Natural killer cell (primary cell): ENCODE measurements at regions of chr3 and their contacts with region 1.

Region 1: DNA sequence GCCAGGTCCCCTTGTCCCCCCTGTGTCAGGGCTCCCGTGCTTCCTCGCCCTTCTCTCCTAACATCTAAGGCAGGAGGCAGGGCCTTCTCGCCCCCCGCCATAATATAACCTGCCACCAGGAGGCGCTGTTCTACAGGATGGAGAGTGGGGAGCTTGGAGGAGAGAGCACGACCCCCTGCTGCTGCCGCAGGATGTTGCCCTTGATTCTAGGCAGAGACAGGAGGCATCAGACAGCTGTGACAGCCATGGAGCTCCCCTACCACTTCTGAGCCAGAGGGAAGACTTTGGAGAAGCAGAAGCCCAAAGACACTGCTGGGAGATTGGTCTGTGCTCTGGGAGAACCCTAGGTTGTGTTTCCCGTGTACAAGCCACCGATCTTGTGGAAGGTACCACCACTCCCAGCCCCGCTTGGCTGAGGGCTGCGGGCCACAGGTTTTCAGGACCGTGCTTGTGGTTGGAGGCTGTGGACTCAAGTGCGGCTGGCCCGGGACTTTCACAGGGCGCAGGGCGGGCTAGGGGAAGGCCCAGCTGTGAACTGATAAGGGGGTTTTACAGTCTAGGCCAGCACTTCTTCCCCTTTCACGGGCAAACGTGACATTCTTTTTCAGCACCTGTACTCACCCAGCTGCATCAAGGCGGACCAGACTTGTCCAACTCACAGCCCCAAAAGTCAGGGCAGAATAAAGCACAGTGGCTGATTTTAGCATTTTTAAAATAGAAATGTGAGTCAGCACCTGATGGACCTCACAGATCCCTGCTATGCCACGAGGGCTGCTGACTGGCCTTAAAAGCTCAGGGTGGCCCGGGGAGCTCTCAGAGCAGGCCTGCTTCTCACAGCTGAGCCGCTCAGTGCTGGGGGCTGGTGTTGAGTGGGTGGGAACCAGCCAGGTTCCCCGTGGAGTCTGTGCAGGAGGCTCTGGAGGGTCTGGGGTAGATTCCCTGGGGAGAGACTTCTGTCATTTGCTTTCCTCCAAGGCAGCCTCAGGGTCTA is 2.6 kb upstream of the TIGIT start:
- DNase-seq: peak; percentile 86 to 93
- ATAC-seq: peak; percentile 78 to 91 (median 86)
- H3K4me3 ChIP-seq: peak overlapping the region; percentile 5
- H3K4me3 Mint-ChIP-seq: peak overlapping the region; percentile 80
- H3K27ac ChIP-seq: peak overlapping the region; percentile 95
- H3K27ac Mint-ChIP-seq: peak overlapping the region; percentile 92
- H3K4me1 ChIP-seq: peaks cover 57% of the 10 kb centered on the region
- H3K4me1 Mint-ChIP-seq: peaks cover 66 to 68% of the 10 kb centered on the region in 2 donors
- H3K27me3 ChIP-seq: no peaks in the 10 kb centered on the region
- H3K27me3 Mint-ChIP-seq: no peaks in the 10 kb centered on the region
- CTCF ChIP-seq: peak; percentile 95

Region 2: DNA sequence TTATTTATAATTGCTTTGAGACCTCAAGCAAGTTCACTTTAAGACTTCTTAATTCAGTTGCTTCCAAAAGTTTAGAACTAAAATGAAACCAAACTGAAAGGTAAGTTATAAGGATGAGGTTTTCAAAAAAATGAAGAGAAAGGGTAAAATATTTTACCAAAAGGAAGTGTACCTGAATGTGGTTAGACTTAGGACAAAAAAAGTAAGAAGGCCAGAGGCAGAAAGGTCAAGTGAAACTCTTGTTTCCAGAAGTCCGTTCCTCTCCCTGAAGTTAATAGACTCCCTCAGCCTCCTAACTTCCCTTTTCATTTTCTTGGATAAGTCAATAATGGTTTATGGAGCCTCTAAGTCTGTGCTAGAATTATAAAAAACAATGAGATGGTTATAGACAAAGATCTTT is 1808.5 kb before region 1 on chr3:
- intact Hi-C with region 1: no loop called
- DNase-seq: no peak
- ATAC-seq: no peak
- H3K4me3 ChIP-seq: no peak overlapping the region
- H3K4me3 Mint-ChIP-seq: no peak overlapping the region
- H3K27ac ChIP-seq: no peak overlapping the region
- H3K27ac Mint-ChIP-seq: no peak overlapping the region
- H3K4me1 ChIP-seq: peaks cover 11% of the 10 kb centered on the region
- H3K4me1 Mint-ChIP-seq: peaks cover 0 to 8% of the 10 kb centered on the region in 2 donors
- H3K27me3 ChIP-seq: no peaks in the 10 kb centered on the region
- H3K27me3 Mint-ChIP-seq: peaks cover 0 to 3% of the 10 kb centered on the region in 2 donors
- CTCF ChIP-seq: no peak

Region 3: GRCh38 chr3:113783980-113784379 is 507.2 kb before region 1 on chr3:
- intact Hi-C with region 1: no loop called
- DNase-seq: no peak
- ATAC-seq: peak; percentile 52 to 55 (median 54)
- H3K4me3 ChIP-seq: no peak overlapping the region
- H3K4me3 Mint-ChIP-seq: peak overlapping the region; percentile 28
- H3K27ac ChIP-seq: peak overlapping the region; percentile 21
- H3K27ac Mint-ChIP-seq: peak overlapping the region; percentile 75 to 84
- H3K4me1 ChIP-seq: peaks cover 3% of the 10 kb centered on the region
- H3K4me1 Mint-ChIP-seq: peaks cover 9% of the 10 kb centered on the region in 2 donors
- H3K27me3 ChIP-seq: no peaks in the 10 kb centered on the region
- H3K27me3 Mint-ChIP-seq: no peaks in the 10 kb centered on the region
- CTCF ChIP-seq: no peak

Region 4: DNA sequence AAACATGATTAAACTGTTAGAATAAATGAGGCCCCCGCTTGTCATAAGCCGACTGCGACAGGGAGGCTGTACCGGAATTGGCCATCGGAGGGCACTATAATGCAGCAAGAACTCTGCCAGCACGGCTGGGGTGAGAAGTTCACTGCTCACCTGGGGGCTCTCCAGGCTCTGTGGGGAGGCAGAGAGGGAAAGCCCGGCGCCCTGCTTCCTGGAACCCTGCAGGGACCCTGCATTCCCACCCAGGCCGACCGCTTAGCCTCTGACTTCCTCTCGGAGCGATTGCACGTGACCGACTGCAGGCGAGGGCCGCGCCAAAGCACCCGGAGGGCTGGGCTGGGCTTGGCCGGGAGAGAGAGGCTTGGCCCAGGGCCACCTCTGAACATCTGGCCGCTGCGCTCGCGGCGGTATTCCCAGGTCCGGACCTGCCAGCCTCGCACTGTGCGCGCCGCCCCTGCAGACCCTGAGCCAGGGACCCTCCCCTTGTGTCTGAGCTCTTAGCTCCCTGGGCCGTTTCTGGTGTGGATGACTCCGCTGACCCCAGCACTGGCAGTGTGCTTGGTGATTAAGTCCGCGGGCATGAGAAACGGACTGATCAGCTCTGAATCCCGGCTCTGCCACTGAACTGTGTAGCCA is 138.6 kb before region 1 on chr3:
- intact Hi-C with region 1: loop called (anchors 1 kb)
- DNase-seq: peak; percentile 78 to 91
- ATAC-seq: peak; percentile 93 to 98 (median 98)
- H3K4me3 ChIP-seq: peak overlapping the region; percentile 28
- H3K4me3 Mint-ChIP-seq: peak overlapping the region; percentile 74
- H3K27ac ChIP-seq: peak overlapping the region; percentile 6
- H3K27ac Mint-ChIP-seq: peak overlapping the region; percentile 19 to 69
- H3K4me1 ChIP-seq: peaks cover 7% of the 10 kb centered on the region
- H3K4me1 Mint-ChIP-seq: peaks cover 8 to 10% of the 10 kb centered on the region in 2 donors
- H3K27me3 ChIP-seq: no peaks in the 10 kb centered on the region
- H3K27me3 Mint-ChIP-seq: peaks cover 0 to 3% of the 10 kb centered on the region in 2 donors
- CTCF ChIP-seq: peak; percentile 98

Region 5: GRCh38 chr3:114223143-114223542 is 68.1 kb before region 1 on chr3:
- intact Hi-C with region 1: loop called (anchors 1 kb)
- DNase-seq: peak in 1 of 2 donors; percentile 70
- ATAC-seq: peak; percentile 52 to 59 (median 57)
- H3K4me3 ChIP-seq: no peak overlapping the region
- H3K4me3 Mint-ChIP-seq: peak overlapping the region; percentile 78
- H3K27ac ChIP-seq: peak overlapping the region; percentile 65
- H3K27ac Mint-ChIP-seq: peak overlapping the region in 1 of 2 donors; percentile 94
- H3K4me1 ChIP-seq: peaks cover 59% of the 10 kb centered on the region
- H3K4me1 Mint-ChIP-seq: peaks cover 78 to 88% of the 10 kb centered on the region in 2 donors
- H3K27me3 ChIP-seq: no peaks in the 10 kb centered on the region
- H3K27me3 Mint-ChIP-seq: no peaks in the 10 kb centered on the region
- CTCF ChIP-seq: no peak

Region 6: DNA sequence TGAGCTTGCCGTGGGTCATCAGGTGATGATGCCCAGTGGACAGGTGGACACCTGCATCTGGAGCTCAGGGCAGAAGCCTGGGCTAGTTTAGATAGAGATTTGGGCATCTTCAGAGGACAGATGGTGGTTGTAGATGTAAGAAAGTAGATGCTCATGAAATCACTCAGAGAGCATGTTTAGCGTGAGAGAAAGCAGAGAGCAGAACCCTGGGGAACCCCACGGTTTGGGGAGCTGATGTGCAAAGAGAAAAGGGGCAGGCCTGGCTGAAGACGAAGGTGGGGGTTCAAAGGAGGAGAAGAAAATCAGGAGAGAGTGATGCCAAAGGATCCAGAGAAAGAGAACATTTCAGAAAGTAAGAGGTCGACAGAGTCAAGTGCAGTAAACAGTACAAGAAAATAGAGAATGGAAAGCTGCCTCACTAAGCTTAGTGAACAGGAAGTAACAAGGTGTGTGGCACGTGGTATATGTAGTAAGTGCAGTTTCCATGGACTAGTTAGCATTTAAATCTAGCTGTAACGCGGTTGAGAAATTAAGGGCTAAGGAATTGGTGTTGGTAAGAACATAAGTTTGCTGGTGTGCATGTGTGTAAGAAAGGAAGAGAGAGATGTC is 16.1 kb after region 1 on chr3:
- intact Hi-C with region 1: loop called (anchors 2 kb)
- DNase-seq: peak in 1 of 2 donors; percentile 72
- ATAC-seq: peak; percentile 88 to 90 (median 89)
- H3K4me3 ChIP-seq: no peak overlapping the region
- H3K4me3 Mint-ChIP-seq: peak overlapping the region; percentile 51
- H3K27ac ChIP-seq: peak overlapping the region; percentile 75
- H3K27ac Mint-ChIP-seq: peak overlapping the region; percentile 84 to 87
- H3K4me1 ChIP-seq: peaks cover 24% of the 10 kb centered on the region
- H3K4me1 Mint-ChIP-seq: peaks cover 48 to 51% of the 10 kb centered on the region in 2 donors
- H3K27me3 ChIP-seq: no peaks in the 10 kb centered on the region
- H3K27me3 Mint-ChIP-seq: no peaks in the 10 kb centered on the region
- CTCF ChIP-seq: no peak

Region 7: DNA sequence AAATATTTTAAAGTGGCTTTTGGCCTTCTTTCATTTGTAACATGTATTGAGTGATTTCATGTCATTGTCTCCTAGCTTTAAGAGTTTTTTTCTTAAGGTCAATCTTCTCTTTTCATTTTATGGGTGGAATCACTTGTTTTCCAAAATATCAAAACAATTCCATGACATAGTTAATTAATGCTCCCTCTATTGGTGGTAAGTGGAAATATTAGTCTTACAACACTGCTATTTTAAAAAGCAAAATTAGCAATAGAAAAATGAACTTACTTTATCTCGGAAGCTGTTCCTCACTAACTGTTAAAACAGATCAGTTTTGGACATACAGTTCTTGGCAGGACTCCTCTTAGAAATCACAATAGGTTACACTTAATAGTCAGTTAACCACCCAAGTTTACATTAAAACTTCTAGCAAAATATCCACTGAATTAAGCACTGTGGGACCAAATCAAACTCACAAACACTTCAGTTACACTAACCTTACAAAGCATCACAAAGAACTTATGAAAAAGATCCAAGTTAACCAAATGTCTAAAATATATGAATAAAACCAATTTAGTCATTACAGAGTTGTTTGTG is 45.0 kb after region 1 on chr3:
- intact Hi-C with region 1: loop called (anchors 1 kb)
- DNase-seq: no peak
- ATAC-seq: no peak
- H3K4me3 ChIP-seq: no peak overlapping the region
- H3K4me3 Mint-ChIP-seq: no peak overlapping the region
- H3K27ac ChIP-seq: no peak overlapping the region
- H3K27ac Mint-ChIP-seq: peak overlapping the region in 1 of 2 donors; percentile 57
- H3K4me1 ChIP-seq: peaks cover 18% of the 10 kb centered on the region
- H3K4me1 Mint-ChIP-seq: peaks cover 35 to 54% of the 10 kb centered on the region in 2 donors
- H3K27me3 ChIP-seq: no peaks in the 10 kb centered on the region
- H3K27me3 Mint-ChIP-seq: no peaks in the 10 kb centered on the region
- CTCF ChIP-seq: peak; percentile 54

Region 8: DNA sequence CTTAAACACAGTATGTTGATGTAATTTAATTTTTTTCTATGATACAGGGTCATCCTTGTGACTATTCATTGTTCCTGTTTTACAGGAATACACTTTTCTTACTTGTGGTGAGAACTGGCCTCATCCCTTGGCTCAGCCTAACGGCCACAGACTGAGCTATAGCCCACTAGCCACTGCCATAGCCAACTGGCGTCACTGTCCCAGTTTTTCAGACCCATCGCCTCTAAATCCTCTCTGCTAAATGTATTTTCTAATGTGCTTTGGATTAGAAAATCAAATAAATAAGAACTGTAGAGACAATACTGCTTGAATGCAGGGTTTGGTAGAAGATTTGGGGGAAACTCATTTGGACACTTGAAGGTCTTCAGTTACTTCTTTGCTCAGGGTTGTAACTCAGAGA is 115.7 kb after region 1 on chr3:
- intact Hi-C with region 1: no loop called
- DNase-seq: no peak
- ATAC-seq: no peak
- H3K4me3 ChIP-seq: no peak overlapping the region
- H3K4me3 Mint-ChIP-seq: no peak overlapping the region
- H3K27ac ChIP-seq: no peak overlapping the region
- H3K27ac Mint-ChIP-seq: no peak overlapping the region
- H3K4me1 ChIP-seq: no peaks in the 10 kb centered on the region
- H3K4me1 Mint-ChIP-seq: peaks cover 8 to 13% of the 10 kb centered on the region in 2 donors
- H3K27me3 ChIP-seq: no peaks in the 10 kb centered on the region
- H3K27me3 Mint-ChIP-seq: peaks cover 6 to 9% of the 10 kb centered on the region in 2 donors
- CTCF ChIP-seq: no peak

Region 9: GRCh38 chr3:114418724-114419543 is 127.7 kb after region 1 on chr3:
- intact Hi-C with region 1: loop called (anchors 2 kb)
- DNase-seq: peak in 1 of 2 donors; percentile 82
- ATAC-seq: peak; percentile 84 to 98 (median 97)
- H3K4me3 ChIP-seq: no peak overlapping the region
- H3K4me3 Mint-ChIP-seq: no peak overlapping the region
- H3K27ac ChIP-seq: no peak overlapping the region
- H3K27ac Mint-ChIP-seq: no peak overlapping the region
- H3K4me1 ChIP-seq: no peaks in the 10 kb centered on the region
- H3K4me1 Mint-ChIP-seq: no peaks in the 10 kb centered on the region
- H3K27me3 ChIP-seq: no peaks in the 10 kb centered on the region
- H3K27me3 Mint-ChIP-seq: no peaks in the 10 kb centered on the region
- CTCF ChIP-seq: peak; percentile 84